ENCODE measurements at regions of chr13 and their contacts with region 1.

Region 1: DNA sequence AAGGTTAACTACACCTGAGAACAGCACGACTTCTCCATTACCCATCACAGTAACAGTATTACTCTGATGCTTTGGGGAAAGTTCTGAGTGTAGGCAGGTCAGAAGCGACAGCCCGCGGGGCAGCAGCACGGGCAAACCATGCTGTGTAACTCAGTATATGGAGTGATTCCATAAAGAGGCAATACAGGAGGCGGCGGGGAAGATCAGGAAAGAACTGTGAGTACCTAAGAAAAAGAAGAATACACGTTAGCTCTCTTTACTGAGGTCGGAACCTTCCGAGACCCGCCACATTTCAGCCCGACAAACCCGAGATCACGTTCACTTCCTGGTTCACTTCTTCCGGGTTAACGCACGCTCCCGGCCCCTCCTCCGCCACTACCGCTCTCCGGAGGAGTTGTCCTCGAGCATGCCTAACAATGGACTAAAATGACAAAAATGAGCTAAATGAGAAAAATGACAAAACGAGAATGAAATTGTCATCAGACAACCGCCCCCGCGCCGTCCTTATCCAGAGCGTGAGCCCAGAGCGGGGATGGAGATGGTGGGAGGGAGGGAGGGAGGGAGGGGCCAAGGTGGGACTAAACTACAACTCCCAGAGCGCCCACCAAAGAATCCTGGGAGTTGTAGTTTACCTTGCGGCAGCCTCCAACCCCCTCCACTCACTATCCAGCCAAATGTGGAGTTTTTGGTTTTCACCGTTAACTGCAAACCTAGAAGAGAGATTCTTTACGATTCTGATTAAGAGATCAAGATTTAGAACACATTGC is at the start of gene MTRF1:
- DNase-seq: peak; percentile 79 to 97 (median 84)

Region 2: GRCh38 chr13:41193919-41194824 is 69.3 kb before region 1 on chr13 and contains the start of gene KBTBD7:
- intact Hi-C with region 1: loop called (anchors 5 kb)
- DNase-seq: peak; percentile 91 to 99 (median 96)

Region 3: DNA sequence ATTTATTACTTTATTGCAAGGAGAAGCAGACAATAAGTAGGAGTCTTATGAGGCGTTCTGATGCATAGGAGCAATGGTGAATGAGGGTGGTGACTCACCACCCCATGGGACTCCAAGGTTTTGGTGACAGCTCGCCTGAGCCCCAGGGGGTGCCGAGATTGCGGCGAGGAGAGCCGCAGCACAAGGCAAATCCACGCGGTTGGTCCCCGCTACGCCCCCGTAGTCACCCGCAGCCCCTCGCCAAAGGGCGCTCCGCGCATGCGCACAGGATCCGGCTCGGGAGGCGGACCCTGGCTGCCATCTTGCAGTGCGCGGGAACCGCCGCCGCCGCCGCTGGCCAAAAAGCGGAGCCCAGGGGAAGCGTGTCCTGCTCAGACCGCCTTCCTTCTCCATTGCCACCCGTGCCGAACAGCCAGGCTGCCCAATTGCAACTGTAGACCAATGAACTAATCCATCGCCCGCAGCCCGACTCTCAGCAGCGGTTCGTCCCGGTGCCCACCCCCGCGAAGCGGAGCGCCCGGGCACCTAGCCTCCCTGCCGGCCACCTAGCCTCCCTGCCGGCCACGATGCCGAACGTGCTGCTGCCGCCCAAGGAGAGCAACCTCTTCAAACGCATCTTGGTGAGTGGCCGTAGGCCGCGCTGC is 47.6 kb after region 1 on chr13 and contains the start of gene NAA16:
- intact Hi-C with region 1: loop called (anchors 5 kb)
- DNase-seq: peak; percentile 88 to 98 (median 90)

Region 4: GRCh38 chr13:41562083-41562482 is 298.6 kb after region 1 on chr13:
- intact Hi-C with region 1: no loop called
- DNase-seq: peak; percentile 81 to 99 (median 89)